ENCODE measurements at regions of chr20 and their contacts with region 1.

Region 1: DNA sequence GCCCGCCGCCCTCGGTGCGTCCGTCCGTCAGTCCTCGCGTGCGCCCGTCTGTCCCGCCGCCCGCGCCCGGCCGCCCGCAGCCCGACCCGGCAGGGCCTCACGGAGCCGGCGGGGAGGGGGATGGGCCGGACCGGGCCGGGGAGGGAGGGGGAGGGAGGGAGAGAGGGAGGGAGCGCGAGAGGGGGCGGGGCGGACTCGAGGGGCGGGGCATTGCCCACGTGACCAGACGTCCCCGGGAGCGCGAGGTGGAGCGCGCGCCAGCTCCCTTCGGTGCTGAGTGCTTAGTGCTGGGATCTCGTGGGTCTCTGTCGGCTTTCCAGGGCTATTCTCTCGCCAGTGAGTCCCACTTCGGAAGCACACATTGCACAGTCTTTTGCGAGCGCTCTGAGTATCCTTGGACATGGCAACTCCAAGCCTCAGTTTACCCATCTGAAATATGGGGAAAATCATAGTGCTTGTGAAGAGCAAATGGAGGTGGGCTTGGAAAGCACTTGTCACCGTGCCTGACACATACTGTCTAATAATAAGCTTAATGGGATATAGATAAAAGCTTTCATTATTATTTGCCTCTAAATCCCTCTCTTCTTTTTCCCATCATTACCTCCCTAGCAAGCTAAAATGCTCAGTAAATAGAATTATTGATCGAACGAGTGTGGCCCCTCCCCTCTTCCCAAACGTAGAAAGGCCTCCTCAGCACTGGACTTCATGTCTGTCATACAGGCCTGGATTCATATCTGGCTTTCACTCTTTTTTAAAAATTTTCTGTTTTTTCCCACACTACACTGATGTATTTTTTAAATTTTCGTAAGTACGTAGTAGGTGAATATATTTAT is at the start of gene NCOA6:
- DNase-seq: peak; percentile 91
- H3K4me3 Mint-ChIP-seq: peak within 1 kb of the TSS; percentile 99
- H3K27ac Mint-ChIP-seq: peak within 1 kb of the TSS; percentile 94
- H3K4me1 Mint-ChIP-seq: peaks cover 37% of the 10 kb centered on the region
- H3K27me3 Mint-ChIP-seq: no peaks in the 10 kb centered on the region
- total RNA-seq, gene NCOA6: 19.6 to 20.7 TPM

Region 2: DNA sequence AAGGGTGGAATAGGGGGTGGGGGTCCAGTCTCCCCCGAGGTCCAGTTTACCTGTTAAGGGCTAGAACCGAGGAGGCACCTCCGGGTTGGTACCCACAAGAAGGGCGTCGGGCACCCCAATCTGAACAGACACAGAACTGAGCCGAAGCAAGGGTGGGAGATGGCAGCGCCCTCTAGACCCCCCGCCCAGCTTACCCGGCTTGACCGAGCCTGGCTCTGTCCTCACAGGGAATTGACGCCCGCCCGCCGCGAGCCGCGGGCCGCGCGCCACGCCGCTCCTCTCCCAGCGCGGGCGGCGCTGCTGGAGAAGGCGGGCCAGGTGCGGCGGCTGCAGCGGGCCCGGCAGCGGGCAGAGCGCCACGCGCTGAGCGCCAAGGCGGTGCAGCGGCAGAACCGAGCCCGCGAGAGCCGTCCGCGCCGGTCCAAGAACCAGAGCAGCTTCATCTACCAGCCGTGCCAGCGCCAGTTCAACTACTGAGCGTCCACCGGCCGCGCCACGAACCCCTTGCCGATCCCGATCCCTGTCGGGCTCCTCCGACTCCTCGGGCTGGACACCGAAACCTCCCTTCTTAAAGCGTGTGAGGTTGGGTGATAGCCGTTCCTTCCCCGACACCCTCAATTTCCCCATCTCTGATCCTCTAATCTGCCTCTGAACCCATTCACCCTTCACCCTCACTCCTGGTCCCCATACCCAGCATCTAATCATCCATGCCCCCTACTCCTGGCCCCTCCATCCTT is 115.7 kb before region 1 on chr20:
- CTCF ChIA-PET with region 1: no interaction called
- POLR2A ChIA-PET with region 1: no interaction called
- intact Hi-C with region 1: loop called (anchors 10 kb)
- DNase-seq: no peak
- H3K4me3 Mint-ChIP-seq: peak overlapping the region; percentile 78
- H3K27ac Mint-ChIP-seq: peak overlapping the region; percentile 81
- H3K4me1 Mint-ChIP-seq: peaks cover 19% of the 10 kb centered on the region
- H3K27me3 Mint-ChIP-seq: no peaks in the 10 kb centered on the region

Region 3: GRCh38 chr20:34896086-34896621 is 70.4 kb after region 1 on chr20:
- CTCF ChIA-PET with region 1: no interaction called
- POLR2A ChIA-PET with region 1: no interaction called
- intact Hi-C with region 1: no loop called
- DNase-seq: no peak
- H3K4me3 Mint-ChIP-seq: no peak overlapping the region
- H3K27ac Mint-ChIP-seq: no peak overlapping the region
- H3K4me1 Mint-ChIP-seq: peaks cover 19% of the 10 kb centered on the region
- H3K27me3 Mint-ChIP-seq: no peaks in the 10 kb centered on the region

Region 4: GRCh38 chr20:35020108-35020928 is 194.6 kb after region 1 on chr20:
- CTCF ChIA-PET with region 1: no interaction called
- POLR2A ChIA-PET with region 1: no interaction called
- intact Hi-C with region 1: no loop called
- DNase-seq: no peak
- H3K4me3 Mint-ChIP-seq: no peak overlapping the region
- H3K27ac Mint-ChIP-seq: no peak overlapping the region
- H3K4me1 Mint-ChIP-seq: no peaks in the 10 kb centered on the region
- H3K27me3 Mint-ChIP-seq: no peaks in the 10 kb centered on the region